Activated T-helper 2 cell treated with anti-CD3 and anti-CD28 coated beads, Interferon-gamma antibody, Interleukin-2, Interleukin-4, amounts not matched to agents 10 μg/mL and 5 μg/mL and 100 μg/mL, durations not matched to agents 14 hours and 24 hours and 36 hours (primary cell): ENCODE measurements at regions of chr5 and their contacts with region 1.

Region 1: GRCh38 chr5:35003018-35003957 is 44.5 kb downstream of the AGXT2 start:
- DNase-seq: peak; percentile 45
- H3K4me3 Mint-ChIP-seq: no peak overlapping the region
- H3K27ac Mint-ChIP-seq: no peak overlapping the region
- H3K4me1 Mint-ChIP-seq: no peaks in the 10 kb centered on the region
- H3K27me3 Mint-ChIP-seq: peaks cover 15% of the 10 kb centered on the region

Region 2: GRCh38 chr5:34474573-34475021 is 528.7 kb before region 1 on chr5:
- intact Hi-C with region 1: loop called (anchors 2 kb)
- DNase-seq: no peak
- H3K4me3 Mint-ChIP-seq: no peak overlapping the region
- H3K27ac Mint-ChIP-seq: no peak overlapping the region
- H3K4me1 Mint-ChIP-seq: peaks cover 4% of the 10 kb centered on the region
- H3K27me3 Mint-ChIP-seq: peaks cover 13% of the 10 kb centered on the region

Region 3: GRCh38 chr5:34486160-34486848 is 517.0 kb before region 1 on chr5:
- intact Hi-C with region 1: loop called (anchors 2 kb)
- DNase-seq: peak; percentile 45
- H3K4me3 Mint-ChIP-seq: no peak overlapping the region
- H3K27ac Mint-ChIP-seq: no peak overlapping the region
- H3K4me1 Mint-ChIP-seq: peaks cover 6% of the 10 kb centered on the region
- H3K27me3 Mint-ChIP-seq: peaks cover 16% of the 10 kb centered on the region

Region 4: DNA sequence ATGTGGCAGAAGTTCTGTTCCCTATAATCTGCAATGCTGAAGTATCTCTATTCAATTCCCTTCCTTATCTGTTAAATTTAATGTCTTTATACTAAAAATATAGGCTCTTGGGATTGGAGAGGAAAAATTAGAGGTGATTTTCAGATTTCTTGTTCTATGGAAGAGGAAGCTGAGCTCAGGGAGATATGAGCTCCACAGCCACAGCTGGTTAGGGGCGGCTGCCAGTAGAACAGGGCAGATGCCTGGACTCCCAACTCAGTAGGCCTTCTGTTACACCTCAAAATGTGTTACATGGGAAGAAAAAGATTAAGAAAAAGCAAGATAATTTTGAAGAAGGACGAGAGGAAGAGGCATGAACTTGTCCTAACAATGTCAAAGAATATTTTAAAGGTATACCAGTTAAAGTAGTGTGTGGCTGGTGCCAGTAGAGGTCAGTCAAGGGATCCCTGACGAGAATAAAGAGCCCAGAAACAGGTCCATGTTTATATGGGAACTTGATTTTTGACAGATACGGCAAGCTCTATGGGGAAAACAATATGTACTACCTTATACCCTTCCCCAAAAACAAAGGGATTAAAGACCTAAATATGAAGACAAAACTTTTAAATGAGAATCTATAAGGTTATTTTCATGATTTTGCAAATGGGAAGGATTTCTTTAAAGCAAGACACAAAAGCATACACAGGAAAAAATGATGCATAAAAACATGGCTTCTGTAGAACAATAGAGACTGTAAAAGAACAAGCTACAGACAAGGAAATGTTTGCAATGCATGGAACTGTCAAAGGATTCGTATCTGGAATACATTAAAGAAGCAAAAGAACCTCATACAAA is 45.2 kb before region 1 on chr5:
- intact Hi-C with region 1: loop called (anchors 2 kb)
- DNase-seq: no peak
- H3K4me3 Mint-ChIP-seq: no peak overlapping the region
- H3K27ac Mint-ChIP-seq: no peak overlapping the region
- H3K4me1 Mint-ChIP-seq: peaks cover 17% of the 10 kb centered on the region
- H3K27me3 Mint-ChIP-seq: no peaks in the 10 kb centered on the region